ENCODE measurements at regions of chr12 and their contacts with region 1.

Region 1: DNA sequence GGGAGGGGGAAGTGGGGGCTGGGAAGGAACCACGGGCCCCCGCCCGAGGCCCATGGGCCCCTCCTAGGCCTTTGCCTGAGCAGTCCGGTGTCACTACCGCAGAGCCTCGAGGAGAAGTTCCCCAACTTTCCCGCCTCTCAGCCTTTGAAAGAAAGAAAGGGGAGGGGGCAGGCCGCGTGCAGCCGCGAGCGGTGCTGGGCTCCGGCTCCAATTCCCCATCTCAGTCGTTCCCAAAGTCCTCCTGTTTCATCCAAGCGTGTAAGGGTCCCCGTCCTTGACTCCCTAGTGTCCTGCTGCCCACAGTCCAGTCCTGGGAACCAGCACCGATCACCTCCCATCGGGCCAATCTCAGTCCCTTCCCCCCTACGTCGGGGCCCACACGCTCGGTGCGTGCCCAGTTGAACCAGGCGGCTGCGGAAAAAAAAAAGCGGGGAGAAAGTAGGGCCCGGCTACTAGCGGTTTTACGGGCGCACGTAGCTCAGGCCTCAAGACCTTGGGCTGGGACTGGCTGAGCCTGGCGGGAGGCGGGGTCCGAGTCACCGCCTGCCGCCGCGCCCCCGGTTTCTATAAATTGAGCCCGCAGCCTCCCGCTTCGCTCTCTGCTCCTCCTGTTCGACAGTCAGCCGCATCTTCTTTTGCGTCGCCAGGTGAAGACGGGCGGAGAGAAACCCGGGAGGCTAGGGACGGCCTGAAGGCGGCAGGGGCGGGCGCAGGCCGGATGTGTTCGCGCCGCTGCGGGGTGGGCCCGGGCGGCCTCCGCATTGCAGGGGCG is at the start of gene GAPDH:
- DNase-seq: peak; percentile 89 to 93
- ATAC-seq: peak; percentile 66 to 70
- H3K4me3 ChIP-seq: peak within 1 kb of the TSS; percentile 75 to 87 (median 76)
- H3K27ac ChIP-seq: peak within 1 kb of the TSS; percentile 91 to 97 (median 96)
- H3K4me1 ChIP-seq: peaks cover 35 to 47% of the 10 kb centered on the region in 2 donors
- H3K27me3 ChIP-seq: no peaks in the 10 kb centered on the region
- CTCF ChIP-seq: peak in 1 of 5 experiments; percentile 3
- POLR2A ChIP-seq: peak; percentile 95 to 96
- total RNA-seq, gene GAPDH: 11,241 to 15,891 (median 13,472) TPM

Region 2: DNA sequence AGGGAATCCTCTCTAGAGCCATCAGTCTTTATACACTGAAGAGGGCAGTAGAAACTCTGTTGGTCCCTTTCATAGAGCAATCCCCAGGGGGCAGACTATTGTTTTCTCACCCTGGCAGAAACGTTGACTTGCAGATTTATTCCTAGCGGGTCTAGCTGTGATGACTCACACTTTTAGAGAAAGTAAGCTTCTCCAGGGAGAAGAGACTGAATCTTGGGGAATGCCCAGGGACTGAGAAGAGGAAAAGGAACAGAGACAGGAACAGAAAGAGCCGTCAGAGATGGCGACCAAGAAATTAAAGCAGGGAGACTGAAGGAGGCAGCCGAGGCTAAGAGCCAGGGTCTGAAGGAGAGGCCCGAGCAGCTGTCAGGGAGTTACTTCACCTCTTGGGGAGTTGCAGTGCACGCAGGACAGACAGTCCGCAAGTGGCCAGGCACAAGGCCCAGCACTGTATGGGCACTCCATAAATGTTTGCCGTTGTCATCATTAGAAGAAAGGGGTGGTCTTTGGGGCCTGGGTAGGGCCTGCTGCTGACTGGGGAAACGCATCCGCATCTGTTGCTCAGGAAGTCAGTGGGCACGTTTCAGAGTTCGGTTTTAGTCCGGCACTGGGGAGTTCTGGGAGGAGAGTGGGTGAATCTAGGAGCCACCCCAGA is 210.6 kb before region 1 on chr12:
- in situ Hi-C with region 1: no loop called
- intact Hi-C with region 1: loop called (anchors 5 kb)
- DNase-seq: peak; percentile 70 to 86
- ATAC-seq: peak; percentile 77 to 78
- H3K4me3 ChIP-seq: peak overlapping the region; percentile 4 to 27 (median 12)
- H3K27ac ChIP-seq: peak overlapping the region; percentile 70 to 85 (median 81)
- H3K4me1 ChIP-seq: peaks cover 57 to 58% of the 10 kb centered on the region in 2 donors
- H3K27me3 ChIP-seq: no peaks in the 10 kb centered on the region
- CTCF ChIP-seq: peak; percentile 30 to 45 (median 40)
- POLR2A ChIP-seq: no peak

Region 3: GRCh38 chr12:6423267-6424007 is 110.7 kb before region 1 on chr12:
- in situ Hi-C with region 1: loop called in 1 of 4 experiments (anchors 25 kb)
- intact Hi-C with region 1: loop called (anchors 1 kb)
- DNase-seq: peak; percentile 77 to 90
- ATAC-seq: peak; percentile 98 to 99
- H3K4me3 ChIP-seq: no peak overlapping the region
- H3K27ac ChIP-seq: peak overlapping the region in 2 of 4 donors; percentile 30 to 56
- H3K4me1 ChIP-seq: peaks cover 0 to 5% of the 10 kb centered on the region in 2 donors
- H3K27me3 ChIP-seq: no peaks in the 10 kb centered on the region
- CTCF ChIP-seq: peak; percentile 88 to 94 (median 91)
- POLR2A ChIP-seq: no peak

Region 4: DNA sequence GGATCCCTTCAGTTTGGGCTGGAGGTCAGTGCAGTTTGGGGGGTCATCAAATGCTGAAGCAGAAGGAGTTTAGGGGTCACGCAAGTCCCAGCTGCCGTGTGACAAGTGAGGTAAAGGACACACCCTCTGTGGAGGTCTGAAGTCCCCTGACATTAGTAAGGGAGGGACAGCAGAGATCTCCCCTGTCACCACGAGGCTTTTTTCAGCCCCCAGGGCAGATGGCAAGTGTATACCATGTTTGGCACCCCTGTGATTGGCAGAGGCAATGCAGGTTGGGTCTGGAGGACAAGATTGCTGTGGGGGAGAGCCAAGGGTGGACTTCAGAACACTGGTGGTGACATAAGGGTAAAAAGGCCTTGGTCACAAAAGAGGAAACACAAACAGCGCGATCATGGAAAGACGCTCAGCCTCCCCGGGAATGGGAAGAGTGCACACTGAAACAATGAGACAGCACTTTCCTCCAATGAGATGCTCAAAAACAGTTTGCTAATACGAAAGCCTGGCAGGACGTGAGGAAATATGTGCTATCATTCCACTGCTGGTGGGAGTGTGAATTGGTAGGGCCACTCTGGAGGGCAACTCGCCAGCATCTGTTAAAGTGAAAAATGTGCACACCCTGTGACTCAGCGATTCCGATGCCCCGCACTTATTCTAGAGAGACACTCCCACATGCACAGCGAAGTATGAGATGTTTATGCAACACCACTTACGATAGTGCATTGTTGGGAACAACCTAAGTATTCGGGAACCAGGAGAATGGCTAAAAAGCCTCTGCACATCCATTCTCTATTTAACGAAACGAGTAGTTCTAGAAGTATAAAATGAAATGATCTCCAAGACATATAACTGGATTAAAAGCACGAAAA is 103.8 kb before region 1 on chr12:
- in situ Hi-C with region 1: loop called in 1 of 4 experiments (anchors 5 kb)
- intact Hi-C with region 1: no loop called
- DNase-seq: peak; percentile 32 to 76
- ATAC-seq: peak; percentile 86 to 92
- H3K4me3 ChIP-seq: peak overlapping the region; percentile 16 to 49 (median 46)
- H3K27ac ChIP-seq: peak overlapping the region; percentile 43 to 64 (median 54)
- H3K4me1 ChIP-seq: peaks cover 15 to 17% of the 10 kb centered on the region in 2 donors
- H3K27me3 ChIP-seq: no peaks in the 10 kb centered on the region
- CTCF ChIP-seq: no peak
- POLR2A ChIP-seq: no peak

Region 5: GRCh38 chr12:6493497-6494257 is 40.4 kb before region 1 on chr12 and contains the start of gene NCAPD2:
- in situ Hi-C with region 1: loop called in 1 of 4 experiments (anchors 5 kb)
- intact Hi-C with region 1: loop called (anchors 1 kb)
- DNase-seq: peak; percentile 94 to 95
- ATAC-seq: peak; percentile 90 to 92
- H3K4me3 ChIP-seq: peak within 1 kb of the TSS; percentile 81 to 99 (median 88)
- H3K27ac ChIP-seq: peak within 1 kb of the TSS; percentile 93 to 100 (median 98)
- H3K4me1 ChIP-seq: peaks cover 21 to 27% of the 10 kb centered on the region in 2 donors
- H3K27me3 ChIP-seq: no peaks in the 10 kb centered on the region
- CTCF ChIP-seq: peak; percentile 54 to 79 (median 60)
- POLR2A ChIP-seq: peak; percentile 65 to 89
- total RNA-seq, gene NCAPD2: 12.3 to 250 (median 13.3) TPM

Region 6: GRCh38 chr12:6523708-6524107 is 10.4 kb before region 1 on chr12:
- in situ Hi-C with region 1: no loop called
- intact Hi-C with region 1: no loop called
- DNase-seq: no peak
- ATAC-seq: no peak
- H3K4me3 ChIP-seq: no peak overlapping the region
- H3K27ac ChIP-seq: no peak overlapping the region
- H3K4me1 ChIP-seq: no peaks in the 10 kb centered on the region
- H3K27me3 ChIP-seq: no peaks in the 10 kb centered on the region
- CTCF ChIP-seq: no peak
- POLR2A ChIP-seq: no peak

Region 7: DNA sequence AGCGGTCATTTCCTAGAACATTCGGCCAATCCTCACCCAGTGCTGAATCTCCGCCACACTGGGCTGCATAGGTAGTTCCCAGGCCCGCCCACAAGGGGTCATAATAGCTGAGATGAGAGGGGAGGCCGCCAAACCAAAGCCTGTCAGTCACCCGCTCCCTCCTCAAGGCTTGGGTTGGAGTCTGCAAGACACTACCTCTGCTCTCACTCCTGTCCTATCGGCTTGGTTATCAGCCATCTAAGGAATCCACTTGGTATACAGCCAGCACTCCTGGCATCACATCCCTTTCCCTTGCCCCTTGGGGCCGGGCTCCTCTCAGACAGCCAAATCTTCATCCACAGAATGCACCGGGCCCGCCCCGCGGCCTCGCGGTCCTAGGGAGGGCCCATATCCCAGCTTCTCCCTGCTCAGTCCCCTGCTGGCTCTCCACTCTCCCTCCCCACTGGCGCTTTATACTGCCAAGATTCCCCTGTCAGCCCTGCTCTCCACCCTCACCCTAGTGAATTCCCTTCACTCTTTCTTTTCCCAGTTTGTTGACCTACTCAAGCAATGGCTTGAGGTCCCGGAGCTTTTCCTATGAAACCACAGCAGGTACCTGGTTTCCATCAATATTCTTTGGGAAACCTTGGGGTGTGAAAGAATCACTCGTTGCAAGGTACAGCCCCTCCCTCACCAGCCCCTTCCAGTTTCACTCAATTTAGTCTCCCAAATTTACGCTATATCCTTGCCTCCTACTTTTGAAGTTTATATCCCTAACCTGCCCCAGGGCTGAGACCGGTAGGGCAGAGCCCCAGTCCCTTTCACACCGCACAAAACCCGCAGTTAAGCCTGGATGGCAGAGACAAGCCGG is 20.3 kb after region 1 on chr12:
- in situ Hi-C with region 1: no loop called
- intact Hi-C with region 1: loop called (anchors 1 kb)
- DNase-seq: peak; percentile 64 to 87
- ATAC-seq: peak; percentile 26 to 29
- H3K4me3 ChIP-seq: peak overlapping the region; percentile 67 to 88 (median 77)
- H3K27ac ChIP-seq: peak overlapping the region; percentile 90 to 99 (median 92)
- H3K4me1 ChIP-seq: peaks cover 66% of the 10 kb centered on the region in 2 donors
- H3K27me3 ChIP-seq: no peaks in the 10 kb centered on the region
- CTCF ChIP-seq: peak in 4 of 5 experiments; percentile 64 to 70 (median 68)
- POLR2A ChIP-seq: no peak

Region 8: DNA sequence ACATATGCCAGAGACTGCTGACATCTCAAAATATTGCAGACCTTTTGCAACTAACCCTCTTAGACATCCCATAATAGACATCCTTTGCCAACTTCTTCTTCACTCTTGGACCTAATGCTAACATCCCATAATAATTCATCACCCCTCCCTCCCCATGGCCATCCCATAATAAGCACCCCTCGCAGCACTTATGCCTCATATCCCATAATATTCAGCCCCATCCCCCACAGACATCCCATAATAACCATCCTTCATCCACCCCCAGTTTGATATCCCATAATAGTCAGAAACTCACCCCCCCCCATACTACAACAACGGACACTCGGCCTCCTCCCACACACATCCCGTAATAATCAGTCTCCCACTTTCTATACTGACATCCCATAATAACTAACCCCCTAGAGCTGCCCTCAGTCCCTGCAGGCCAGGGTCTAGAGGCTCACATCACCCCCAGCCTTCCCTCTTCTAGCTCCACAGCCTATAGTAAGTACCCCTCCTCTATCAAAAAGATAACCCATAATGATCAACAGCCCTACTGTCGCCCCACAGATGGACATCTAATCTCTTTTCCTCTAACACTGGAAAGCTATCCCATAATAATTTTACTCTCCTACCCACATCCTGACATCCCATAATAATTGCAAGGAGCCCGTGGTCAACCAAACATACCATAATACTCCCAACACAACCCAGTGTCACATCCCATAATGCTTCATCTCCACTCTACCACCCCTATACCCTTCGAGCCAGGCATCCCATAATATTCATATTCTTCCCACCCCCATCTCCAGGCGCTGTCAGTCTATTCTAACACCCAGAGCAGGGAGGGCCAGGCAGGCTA is 73.9 kb after region 1 on chr12:
- in situ Hi-C with region 1: no loop called
- intact Hi-C with region 1: loop called (anchors 2 kb)
- DNase-seq: peak in 1 of 2 donors; percentile 52
- ATAC-seq: peak; percentile 18 to 34
- H3K4me3 ChIP-seq: peak overlapping the region in 1 of 4 donors; percentile 98
- H3K27ac ChIP-seq: peak overlapping the region; percentile 95 to 99 (median 97)
- H3K4me1 ChIP-seq: peaks cover 44 to 52% of the 10 kb centered on the region in 2 donors
- H3K27me3 ChIP-seq: no peaks in the 10 kb centered on the region
- CTCF ChIP-seq: no peak
- POLR2A ChIP-seq: no peak

Measured in gastrocnemius medialis (tissue), 4 donors.